ENCODE measurements at regions of chr22 and their contacts with region 1.

Region 1: DNA sequence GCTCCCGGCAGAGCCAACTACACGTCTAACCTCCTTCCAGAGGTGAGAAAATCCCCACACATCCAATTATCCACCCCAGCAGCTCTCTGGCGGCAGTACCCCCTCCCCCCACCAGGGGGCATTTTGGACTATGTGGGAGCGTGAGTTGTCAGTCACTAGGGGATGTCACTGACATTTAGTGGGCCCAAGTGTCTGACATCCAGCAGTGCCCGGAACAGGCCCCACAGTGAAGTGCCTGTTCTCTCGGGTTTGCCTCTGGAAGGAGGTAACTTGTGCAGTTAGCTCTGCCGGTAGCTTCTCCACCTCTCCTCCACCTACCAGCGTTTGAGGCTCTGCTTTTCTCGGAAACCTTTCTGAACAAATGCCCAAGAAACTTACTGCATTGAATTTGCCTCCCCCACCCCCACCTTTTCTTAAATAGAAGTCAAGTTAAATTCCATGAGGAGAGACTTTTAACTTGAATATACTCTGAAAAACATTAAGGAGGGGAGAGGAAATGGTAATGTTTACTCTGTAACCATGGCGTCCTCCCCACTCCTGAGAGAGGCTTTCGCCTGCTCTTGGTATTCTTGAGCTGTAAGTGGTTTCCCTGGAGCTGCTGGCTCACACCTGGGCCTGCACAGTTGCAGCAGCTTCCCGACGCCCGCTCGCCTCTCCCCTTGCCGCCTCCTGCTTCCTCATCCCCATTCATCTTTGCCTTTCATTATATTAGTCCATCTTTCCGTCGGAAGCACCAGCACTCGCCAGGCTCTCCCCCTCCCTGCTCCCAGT is 112.8 kb downstream of the WNT7B start:
- DNase-seq: peak; percentile 69 to 78
- H3K4me3 ChIP-seq: no peak overlapping the region
- H3K27ac ChIP-seq: no peak overlapping the region
- H3K4me1 ChIP-seq: peaks cover 18 to 29% of the 10 kb centered on the region in 2 donors
- H3K27me3 ChIP-seq: no peaks in the 10 kb centered on the region
- CTCF ChIP-seq: peak; percentile 70 to 90 (median 80)
- POLR2A ChIP-seq: no peak

Region 2: DNA sequence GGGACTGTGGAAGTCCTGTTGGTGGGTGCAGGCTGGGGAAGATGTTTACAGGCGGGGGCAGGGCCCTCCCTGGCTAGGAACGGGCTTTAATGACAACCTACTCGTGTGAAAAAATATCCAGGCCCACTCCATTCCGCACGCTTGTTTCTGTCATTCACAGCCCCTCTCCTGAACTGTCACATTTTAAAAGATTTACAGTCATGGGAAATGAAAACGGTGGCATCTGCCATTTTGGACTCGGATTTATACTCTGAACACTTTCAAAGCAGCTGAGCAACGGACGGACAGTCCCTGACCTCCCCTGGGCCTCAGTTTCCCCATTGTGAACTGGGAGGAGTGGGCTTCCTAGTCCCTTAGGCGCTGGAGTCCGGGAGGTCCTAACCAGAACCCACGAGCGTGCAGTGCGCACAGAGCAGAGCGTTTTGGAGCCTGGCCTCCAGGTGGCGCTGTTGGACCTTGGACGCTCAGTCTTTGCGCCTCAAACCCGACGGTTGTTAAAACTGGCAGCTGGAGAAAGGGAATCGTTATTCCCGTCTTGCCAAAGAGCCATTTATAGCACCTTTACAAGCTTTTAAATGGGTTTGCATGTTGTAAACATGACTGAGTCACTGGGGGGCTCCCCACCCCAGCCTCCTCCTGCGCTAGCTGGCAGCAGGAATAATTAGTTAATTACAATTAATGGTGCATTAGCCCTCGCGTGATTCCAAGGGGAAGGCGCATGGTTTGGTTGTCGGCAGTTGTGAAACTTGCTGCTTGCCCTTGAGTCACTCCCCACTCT is 286.2 kb before region 1 on chr22:
- intact Hi-C with region 1: loop called (anchors 5 kb)
- DNase-seq: peak; percentile 82 to 83
- H3K4me3 ChIP-seq: no peak overlapping the region
- H3K27ac ChIP-seq: no peak overlapping the region
- H3K4me1 ChIP-seq: no peaks in the 10 kb centered on the region
- H3K27me3 ChIP-seq: no peaks in the 10 kb centered on the region
- CTCF ChIP-seq: peak; percentile 83 to 95 (median 90)
- POLR2A ChIP-seq: no peak

Region 3: DNA sequence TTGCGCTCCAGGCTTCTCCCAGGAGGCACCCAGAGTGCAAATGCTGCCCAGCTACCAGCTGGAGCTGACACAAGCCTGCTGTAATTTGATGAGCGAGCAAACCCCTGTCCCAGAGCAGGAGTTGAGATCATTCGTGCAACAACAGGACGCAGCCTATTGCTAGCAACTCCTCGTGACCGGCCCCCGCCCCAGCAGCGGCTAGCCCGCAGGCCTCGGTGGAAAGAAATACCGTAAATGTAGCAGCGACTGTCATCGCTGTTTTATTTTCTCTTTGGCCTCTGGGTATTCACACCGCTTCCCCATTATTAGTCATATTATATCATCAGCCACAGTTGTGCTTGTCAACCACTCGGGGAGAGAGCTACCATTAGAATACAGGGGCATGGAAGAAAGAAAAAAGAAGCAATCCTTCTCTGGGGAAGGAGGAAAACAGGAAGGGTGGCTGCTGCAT is 251.7 kb before region 1 on chr22:
- intact Hi-C with region 1: no loop called
- DNase-seq: peak in 1 of 2 donors; percentile 26
- H3K4me3 ChIP-seq: no peak overlapping the region
- H3K27ac ChIP-seq: no peak overlapping the region
- H3K4me1 ChIP-seq: peaks cover 3 to 7% of the 10 kb centered on the region in 2 donors
- H3K27me3 ChIP-seq: no peaks in the 10 kb centered on the region
- CTCF ChIP-seq: no peak
- POLR2A ChIP-seq: no peak

Region 4: GRCh38 chr22:45645526-45646414 is 218.4 kb before region 1 on chr22:
- intact Hi-C with region 1: loop called (anchors 10 kb)
- DNase-seq: peak; percentile 78 to 79
- H3K4me3 ChIP-seq: peak overlapping the region in 1 of 3 donors; percentile 20
- H3K27ac ChIP-seq: peak overlapping the region in 2 of 3 donors; percentile 49 to 77
- H3K4me1 ChIP-seq: peaks cover 16 to 28% of the 10 kb centered on the region in 2 donors
- H3K27me3 ChIP-seq: no peaks in the 10 kb centered on the region
- CTCF ChIP-seq: peak; percentile 48 to 98 (median 86)
- POLR2A ChIP-seq: no peak

Region 5: DNA sequence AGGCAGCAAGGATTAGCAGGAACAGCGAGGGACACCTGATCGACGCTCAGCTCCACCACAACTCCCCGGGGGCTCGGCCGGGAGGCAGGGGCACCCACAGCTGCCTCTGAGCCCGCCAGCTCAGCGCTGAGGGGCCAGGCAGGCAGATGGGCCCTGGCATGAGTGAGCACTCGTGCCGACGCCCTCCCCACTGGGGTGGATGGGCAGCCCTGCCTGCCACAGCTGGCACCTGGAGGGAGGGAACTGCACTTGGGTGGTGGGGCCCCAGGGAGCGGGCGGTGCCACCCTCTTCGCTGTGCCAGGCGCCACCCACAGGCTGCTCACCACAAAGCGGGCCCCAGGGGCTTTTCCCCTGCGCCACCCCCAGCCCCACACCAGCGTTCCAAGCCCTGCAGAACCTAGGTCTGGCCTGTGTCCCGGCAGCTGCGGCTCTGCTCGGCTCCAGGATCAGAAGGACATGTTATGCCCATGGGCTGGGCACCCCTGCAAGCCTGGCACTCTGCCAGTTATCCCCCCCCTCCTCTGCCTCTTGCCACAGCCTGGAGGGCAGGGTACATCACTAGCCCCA is 84.0 kb after region 1 on chr22:
- intact Hi-C with region 1: no loop called
- DNase-seq: no peak
- H3K4me3 ChIP-seq: no peak overlapping the region
- H3K27ac ChIP-seq: no peak overlapping the region
- H3K4me1 ChIP-seq: no peaks in the 10 kb centered on the region
- H3K27me3 ChIP-seq: no peaks in the 10 kb centered on the region
- CTCF ChIP-seq: no peak
- POLR2A ChIP-seq: no peak

Region 6: GRCh38 chr22:45977003-45977411 is 112.8 kb after region 1 on chr22 and contains the start of gene WNT7B:
- intact Hi-C with region 1: loop called (anchors 2 kb)
- DNase-seq: peak; percentile 46 to 48
- H3K4me3 ChIP-seq: peak within 1 kb of the TSS in 1 of 3 donors; percentile 27
- H3K27ac ChIP-seq: no peak within 1 kb of the TSS
- H3K4me1 ChIP-seq: peaks cover 14 to 44% of the 10 kb centered on the region in 2 donors
- H3K27me3 ChIP-seq: no peaks in the 10 kb centered on the region
- CTCF ChIP-seq: no peak
- POLR2A ChIP-seq: peak in 1 of 2 donors; percentile 23
- total RNA-seq, gene WNT7B: 0.83 to 4.3 (median 2.5) TPM in 3 of 4 donors, not detected in the other

Region 7: DNA sequence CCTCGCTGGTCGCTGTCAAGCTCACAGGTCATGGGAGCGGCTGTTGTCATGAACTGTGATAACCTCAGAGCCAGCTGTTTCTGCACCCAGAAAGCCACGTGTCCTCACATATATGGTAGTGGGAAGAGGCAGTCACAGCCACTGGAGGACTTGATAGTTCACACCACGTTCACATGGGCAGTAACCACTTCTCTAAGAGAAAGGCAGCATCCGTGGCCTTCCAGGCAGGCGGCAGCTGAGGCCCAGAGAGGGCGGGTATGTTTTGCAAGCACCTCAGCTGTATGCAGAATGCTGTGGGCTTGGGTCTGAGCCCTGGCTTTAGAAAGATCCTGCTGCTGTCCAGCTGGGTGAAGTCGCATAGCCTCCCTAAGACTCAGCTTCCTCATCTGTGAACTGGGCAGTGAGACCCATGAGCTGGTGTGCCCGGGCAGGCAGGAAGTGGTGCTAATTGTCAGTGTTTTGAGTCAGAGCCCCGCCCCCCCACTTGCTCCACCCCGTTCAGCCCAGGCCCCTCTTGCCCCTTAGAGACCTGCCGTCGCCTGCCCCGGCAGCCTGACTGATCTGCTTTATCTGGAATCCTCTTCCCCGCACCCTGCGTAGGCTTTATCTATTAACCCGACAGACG is 416.9 kb after region 1 on chr22:
- intact Hi-C with region 1: no loop called
- DNase-seq: no peak
- H3K4me3 ChIP-seq: no peak overlapping the region
- H3K27ac ChIP-seq: no peak overlapping the region
- H3K4me1 ChIP-seq: no peaks in the 10 kb centered on the region
- H3K27me3 ChIP-seq: no peaks in the 10 kb centered on the region
- CTCF ChIP-seq: no peak
- POLR2A ChIP-seq: no peak

Measured in thyroid gland (tissue), 4 donors.